ENCODE measurements at regions of chr16 and their contacts with region 1.

Region 1: GRCh38 chr16:85821441-85822135 is 22.1 kb downstream of the COX4I1 start:
- DNase-seq: peak; percentile 76 to 92
- ATAC-seq: peak; percentile 87 to 92
- H3K4me3 ChIP-seq: no peak overlapping the region
- H3K27ac ChIP-seq: no peak overlapping the region
- H3K4me1 ChIP-seq: no peaks in the 10 kb centered on the region
- CTCF ChIP-seq: peak; percentile 94
- EP300 ChIP-seq: no peak
- POLR2A ChIP-seq: no peak
- RAD21 ChIP-seq: peak; percentile 98 to 99

Region 2: DNA sequence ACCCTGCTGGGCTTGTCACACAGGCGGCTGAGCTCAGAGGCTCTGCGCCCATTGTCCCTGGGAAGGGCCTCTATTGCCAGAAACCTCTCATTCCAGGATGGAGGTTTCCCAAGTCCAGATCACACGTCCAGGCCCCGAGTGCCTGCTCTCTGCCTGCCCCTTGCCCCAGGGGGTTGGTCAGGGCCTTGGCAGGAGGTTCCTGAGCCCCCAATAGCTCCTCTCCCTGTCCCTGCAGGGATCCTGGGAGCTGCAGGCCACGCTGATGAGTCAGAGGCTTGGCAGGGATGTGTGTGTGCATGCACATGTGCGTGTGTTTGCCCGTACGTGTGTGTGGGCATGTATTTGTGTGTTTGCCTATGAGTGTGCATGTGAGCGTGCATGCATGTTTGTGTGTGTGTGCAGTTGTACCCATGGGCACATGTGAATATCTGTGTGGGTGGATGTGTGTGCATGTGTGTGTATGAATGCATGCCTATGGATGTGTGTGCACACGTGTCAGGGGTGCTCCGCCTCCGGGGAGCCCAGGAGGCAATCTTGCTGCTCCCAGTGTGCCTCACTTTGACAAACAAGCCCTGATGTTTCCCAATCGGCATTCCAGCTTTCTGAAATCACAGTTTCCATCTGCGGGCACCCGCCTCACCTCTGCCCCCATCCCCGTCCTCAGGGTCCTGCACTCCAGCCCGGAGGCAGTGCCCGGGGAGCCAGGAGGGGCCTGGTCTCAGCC is 306.8 kb before region 1 on chr16:
- CTCF ChIA-PET with region 1: no interaction called
- POLR2A ChIA-PET with region 1: no interaction called
- DNase-seq: peak; percentile 92 to 95
- ATAC-seq: peak; percentile 85 to 89
- H3K4me3 ChIP-seq: peak overlapping the region; percentile 24; the same call in 2 of the 3 replicates
- H3K27ac ChIP-seq: peak overlapping the region; percentile 95 to 97
- H3K4me1 ChIP-seq: peaks cover 36% of the 10 kb centered on the region
- CTCF ChIP-seq: no peak
- EP300 ChIP-seq: peak; percentile 28 to 78; a peak in 2 of 5 replicates
- POLR2A ChIP-seq: 0 out of 2 replicates have a peak, but pooled peaks have one; percentile 14
- RAD21 ChIP-seq: peak in 1 of 2 experiments; percentile 45; a peak in 2 of 5 replicates

Region 3: DNA sequence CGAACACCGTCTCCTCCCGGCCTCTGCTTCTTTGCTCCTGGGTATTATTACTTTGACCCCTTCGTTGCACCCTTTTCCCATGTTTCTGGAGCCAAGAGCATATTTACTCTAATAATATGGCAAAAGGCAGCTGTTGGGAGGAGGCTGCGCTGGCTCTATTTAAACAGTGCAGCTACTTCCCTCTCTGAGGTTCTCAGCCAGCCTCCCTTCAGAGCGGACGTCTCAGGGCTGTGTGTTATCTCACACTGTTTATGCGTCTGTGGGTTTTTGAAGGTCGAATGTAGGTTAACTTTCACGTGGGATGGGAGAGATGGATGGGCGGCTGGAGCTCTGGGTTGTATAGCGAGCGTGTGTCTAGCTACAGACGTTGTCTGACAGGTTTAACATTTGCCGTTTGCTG is 23.2 kb after region 1 on chr16:
- CTCF ChIA-PET with region 1: interaction called, 126 read pairs
- POLR2A ChIA-PET with region 1: no interaction called
- DNase-seq: no peak
- ATAC-seq: no peak
- H3K4me3 ChIP-seq: no peak overlapping the region
- H3K27ac ChIP-seq: no peak overlapping the region
- H3K4me1 ChIP-seq: no peaks in the 10 kb centered on the region
- CTCF ChIP-seq: no peak
- EP300 ChIP-seq: no peak
- POLR2A ChIP-seq: no peak
- RAD21 ChIP-seq: no peak

Region 4: DNA sequence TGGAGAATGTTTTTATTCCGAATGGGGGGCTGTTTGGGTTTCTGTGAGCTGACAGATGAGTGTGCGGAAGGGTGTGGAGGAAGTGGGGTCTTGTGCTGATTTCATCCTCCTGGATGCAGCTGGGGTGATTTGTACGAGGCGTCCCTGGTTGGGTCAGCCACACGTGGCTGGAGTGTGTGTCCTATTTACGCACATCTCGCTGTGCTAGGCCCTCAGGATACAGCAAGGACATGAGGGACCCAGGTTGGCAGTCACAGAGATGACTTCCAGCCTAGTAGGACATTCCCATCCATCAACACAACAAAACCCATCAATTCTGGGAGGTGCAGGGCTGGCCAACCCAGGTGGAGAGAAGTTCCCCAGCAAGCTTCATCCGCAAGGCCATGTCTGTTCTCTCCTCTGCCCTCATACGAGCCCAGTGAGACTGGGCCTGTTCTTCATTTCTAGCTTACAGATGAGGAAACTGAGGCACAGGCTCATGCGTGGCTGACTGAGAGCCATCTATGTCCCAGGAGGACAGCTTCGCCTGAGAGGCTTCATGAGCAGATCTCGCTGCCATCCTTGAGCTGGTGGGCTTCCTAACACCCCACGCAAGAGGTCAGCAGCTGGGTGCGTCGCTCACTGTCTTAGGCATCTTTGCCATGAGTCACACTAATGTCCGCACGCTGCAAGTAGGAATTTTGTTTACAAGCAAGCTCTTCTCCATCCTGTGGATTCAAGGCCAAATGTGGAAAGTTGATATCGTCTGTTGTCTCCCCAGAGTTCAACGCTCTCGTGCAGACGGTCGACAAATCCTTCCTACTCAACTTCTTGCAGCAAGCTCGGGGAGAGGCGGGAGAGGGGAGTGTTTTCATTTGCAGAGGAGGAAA is 101.8 kb after region 1 on chr16:
- CTCF ChIA-PET with region 1: interaction called, 12 read pairs
- POLR2A ChIA-PET with region 1: no interaction called
- DNase-seq: peak in 1 of 2 experiments; percentile 36
- ATAC-seq: no peak
- H3K4me3 ChIP-seq: no peak overlapping the region
- H3K27ac ChIP-seq: no peak overlapping the region
- H3K4me1 ChIP-seq: no peaks in the 10 kb centered on the region
- CTCF ChIP-seq: no peak
- EP300 ChIP-seq: no peak
- POLR2A ChIP-seq: no peak
- RAD21 ChIP-seq: no peak

Region 5: GRCh38 chr16:85986931-85987749 is 165.6 kb after region 1 on chr16:
- CTCF ChIA-PET with region 1: interaction called, 345 read pairs
- POLR2A ChIA-PET with region 1: no interaction called
- DNase-seq: no peak
- ATAC-seq: peak in 1 of 2 experiments; percentile 62; a peak in 3 of 6 replicates
- H3K4me3 ChIP-seq: no peak overlapping the region
- H3K27ac ChIP-seq: no peak overlapping the region
- H3K4me1 ChIP-seq: no peaks in the 10 kb centered on the region
- CTCF ChIP-seq: peak; percentile 50
- EP300 ChIP-seq: no peak
- POLR2A ChIP-seq: no peak
- RAD21 ChIP-seq: peak; percentile 48 to 83

Region 6: DNA sequence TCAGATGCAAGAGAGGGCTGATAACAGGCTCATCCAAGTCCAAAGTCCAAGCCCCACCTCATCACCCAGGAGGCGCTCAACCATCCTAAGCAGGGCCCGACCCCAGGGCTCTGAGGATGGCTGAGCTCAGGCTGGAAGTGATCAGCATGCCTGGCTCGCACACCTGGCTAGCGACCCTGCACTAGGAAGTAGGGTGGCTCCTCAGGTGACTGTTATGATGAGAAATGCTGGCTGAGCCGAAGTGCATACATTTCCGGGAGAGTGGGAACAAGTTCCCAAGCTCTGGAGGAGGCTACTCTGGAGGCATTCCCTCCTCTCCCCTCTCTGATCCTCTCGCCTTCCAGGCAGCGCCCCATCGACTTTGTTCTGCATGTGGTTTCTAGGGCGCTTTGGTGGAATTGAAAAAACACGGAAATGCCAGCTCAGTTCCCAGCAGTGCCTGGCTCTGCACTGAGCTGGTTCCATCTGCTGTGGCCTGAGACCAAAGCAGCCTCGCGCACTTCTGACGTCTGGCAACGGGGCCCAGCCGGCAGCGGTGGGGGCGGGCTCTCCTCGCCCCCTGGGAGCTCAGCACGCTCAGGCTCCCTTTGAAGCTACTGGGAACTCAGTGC is 207.6 kb after region 1 on chr16:
- CTCF ChIA-PET with region 1: interaction called, 405 read pairs
- POLR2A ChIA-PET with region 1: no interaction called
- DNase-seq: no peak
- ATAC-seq: peak in 1 of 2 experiments; percentile 15; a peak in 1 of 6 replicates
- H3K4me3 ChIP-seq: no peak overlapping the region
- H3K27ac ChIP-seq: no peak overlapping the region
- H3K4me1 ChIP-seq: no peaks in the 10 kb centered on the region
- CTCF ChIP-seq: no peak
- EP300 ChIP-seq: no peak
- POLR2A ChIP-seq: no peak
- RAD21 ChIP-seq: no peak

Region 7: DNA sequence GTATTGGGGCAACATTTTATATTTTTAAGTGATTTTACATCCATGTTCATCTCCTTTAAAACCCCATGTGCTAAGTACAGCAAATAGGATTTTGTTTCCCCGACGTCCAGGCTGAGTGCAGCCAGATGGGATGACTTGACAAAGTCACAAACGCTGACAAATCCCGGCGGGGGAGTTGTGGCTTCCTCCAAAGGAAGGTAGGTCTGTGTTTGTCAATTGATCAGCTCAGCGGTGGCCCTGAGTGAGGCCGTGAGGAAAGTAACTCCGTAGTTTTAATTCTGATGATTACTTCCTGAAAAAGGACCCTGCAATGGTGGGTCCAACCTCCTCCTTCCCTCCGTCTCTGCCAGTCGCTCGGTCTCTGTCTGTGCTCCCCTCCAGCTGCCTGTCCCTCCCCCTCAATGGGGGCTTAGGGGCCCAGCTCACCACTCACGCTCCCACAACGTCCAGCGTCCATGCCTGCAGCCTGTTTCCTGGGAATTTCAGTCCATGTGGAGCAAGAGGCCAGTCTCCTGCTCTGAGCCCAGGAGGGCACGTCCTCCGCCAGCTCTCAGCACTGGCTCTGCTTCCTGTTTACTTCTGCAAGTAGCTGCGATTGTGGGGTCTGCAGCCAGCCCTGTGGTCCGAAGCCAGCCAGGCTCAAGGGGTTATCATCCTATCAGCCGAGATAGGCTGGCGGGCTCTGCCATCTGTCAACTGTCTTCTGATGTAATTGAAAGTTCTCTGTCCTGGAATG is 479.3 kb after region 1 on chr16:
- CTCF ChIA-PET with region 1: no interaction called
- POLR2A ChIA-PET with region 1: no interaction called
- DNase-seq: no peak
- ATAC-seq: no peak
- H3K4me3 ChIP-seq: no peak overlapping the region
- H3K27ac ChIP-seq: no peak overlapping the region
- H3K4me1 ChIP-seq: no peaks in the 10 kb centered on the region
- CTCF ChIP-seq: no peak
- EP300 ChIP-seq: no peak
- POLR2A ChIP-seq: no peak
- RAD21 ChIP-seq: no peak